ENCODE measurements at regions of chr3 and their contacts with region 1.

Region 1: DNA sequence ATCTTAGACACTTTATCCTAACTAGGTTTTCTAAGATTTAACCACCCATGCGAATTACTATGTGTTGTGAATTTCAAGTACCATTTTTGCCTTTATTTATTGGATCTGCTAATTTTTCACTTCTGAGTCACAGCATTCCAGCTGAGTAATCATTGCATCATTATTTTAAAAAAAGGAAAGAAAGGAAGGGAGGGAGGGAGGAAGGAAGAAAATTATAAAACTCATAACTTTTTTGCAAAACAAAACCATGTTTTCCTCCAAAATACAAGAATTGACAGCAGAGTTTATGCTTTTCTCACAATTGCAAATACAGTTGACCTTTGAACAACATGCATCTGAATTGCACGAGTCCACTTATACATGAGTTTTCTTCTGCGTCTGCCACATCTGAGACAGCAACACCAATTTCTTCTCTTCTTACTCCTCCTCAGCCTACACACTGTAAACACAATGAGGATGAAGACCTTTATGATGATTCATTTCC is 651.4 kb upstream of the NECTIN3 start:
- DNase-seq: no peak
- H3K4me3 ChIP-seq: no peak overlapping the region
- H3K27ac ChIP-seq: no peak overlapping the region
- H3K4me1 ChIP-seq: peaks cover 0 to 13% of the 10 kb centered on the region in 2 donors
- H3K27me3 ChIP-seq: no peaks in the 10 kb centered on the region
- CTCF ChIP-seq: no peak

Region 2: GRCh38 chr3:109685084-109686079 is 734.8 kb before region 1 on chr3:
- intact Hi-C with region 1: loop called (anchors 5 kb)
- DNase-seq: peak; percentile 91 to 98
- H3K4me3 ChIP-seq: peak overlapping the region in 1 of 2 donors; percentile 9
- H3K27ac ChIP-seq: peak overlapping the region; percentile 75 to 76
- H3K4me1 ChIP-seq: peaks cover 0 to 6% of the 10 kb centered on the region in 2 donors
- H3K27me3 ChIP-seq: no peaks in the 10 kb centered on the region
- CTCF ChIP-seq: no peak

Region 3: GRCh38 chr3:110352841-110353604 is 67.2 kb before region 1 on chr3:
- intact Hi-C with region 1: loop called (anchors 5 kb)
- DNase-seq: no peak
- H3K4me3 ChIP-seq: no peak overlapping the region
- H3K27ac ChIP-seq: peak overlapping the region; percentile 20 to 62
- H3K4me1 ChIP-seq: peaks cover 2 to 8% of the 10 kb centered on the region in 2 donors
- H3K27me3 ChIP-seq: no peaks in the 10 kb centered on the region
- CTCF ChIP-seq: no peak